ENCODE measurements at regions of chr15 and their contacts with region 1.

Region 1: GRCh38 chr15:41936649-41937567 is 35.4 kb downstream of the EHD4 start:
- DNase-seq: peak; percentile 91
- ATAC-seq: peak; percentile 62
- H3K4me3 Mint-ChIP-seq: peak overlapping the region; percentile 60
- H3K27ac Mint-ChIP-seq: peak overlapping the region; percentile 100
- H3K4me1 Mint-ChIP-seq: peaks cover 74% of the 10 kb centered on the region
- H3K27me3 Mint-ChIP-seq: no peaks in the 10 kb centered on the region

Region 2: DNA sequence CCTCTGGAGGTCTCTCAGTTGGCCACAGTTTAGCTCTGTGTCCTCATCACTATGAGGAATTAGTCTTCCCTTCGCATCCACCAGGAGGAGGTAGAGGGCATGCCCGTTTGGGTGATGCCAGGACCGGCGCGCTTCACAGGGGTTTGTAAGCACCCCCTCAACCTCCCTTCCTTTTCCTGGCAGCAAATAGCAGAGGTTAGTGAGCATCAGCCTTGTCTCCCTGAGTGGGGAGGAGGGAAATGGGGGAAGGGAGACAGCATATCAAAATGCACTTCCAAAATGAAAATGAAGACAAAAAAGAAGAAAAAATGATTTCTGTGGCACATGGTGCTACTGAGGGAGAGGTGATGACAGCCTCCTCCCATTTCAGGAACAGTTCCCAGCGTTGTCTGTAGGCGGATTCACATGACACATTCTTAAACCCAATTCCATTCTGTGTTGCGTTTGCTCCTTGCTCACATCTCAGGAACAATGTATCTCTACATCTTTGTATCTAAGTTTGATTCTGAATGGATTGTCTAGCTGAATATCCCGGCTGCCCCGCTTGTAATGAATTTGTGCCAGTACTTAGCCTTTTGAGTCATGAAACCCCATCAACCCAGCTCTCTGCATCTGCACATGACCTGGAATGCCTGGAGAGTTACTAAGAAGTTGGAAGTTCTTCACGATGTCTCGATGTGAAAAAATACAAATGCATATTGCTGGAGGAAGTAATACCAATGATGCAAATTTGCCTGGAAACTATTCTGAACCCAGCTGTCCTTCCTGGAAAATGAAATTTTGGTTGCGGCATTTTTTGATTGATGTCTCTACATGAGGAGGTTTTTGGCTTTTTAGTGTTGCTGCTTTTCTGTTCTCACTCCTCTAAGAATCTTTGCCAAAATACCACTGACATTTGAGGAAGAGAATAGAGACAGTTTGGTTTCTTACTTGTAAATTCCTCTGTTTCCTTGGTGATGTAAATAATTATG is 332.7 kb before region 1 on chr15:
- CTCF ChIA-PET with region 1: no interaction called
- POLR2A ChIA-PET with region 1: no interaction called
- intact Hi-C with region 1: no loop called
- DNase-seq: peak; percentile 75
- ATAC-seq: peak; percentile 96
- H3K4me3 Mint-ChIP-seq: peak overlapping the region; percentile 58
- H3K27ac Mint-ChIP-seq: peak overlapping the region; percentile 40
- H3K4me1 Mint-ChIP-seq: peaks cover 11% of the 10 kb centered on the region
- H3K27me3 Mint-ChIP-seq: peaks cover 14% of the 10 kb centered on the region

Region 3: DNA sequence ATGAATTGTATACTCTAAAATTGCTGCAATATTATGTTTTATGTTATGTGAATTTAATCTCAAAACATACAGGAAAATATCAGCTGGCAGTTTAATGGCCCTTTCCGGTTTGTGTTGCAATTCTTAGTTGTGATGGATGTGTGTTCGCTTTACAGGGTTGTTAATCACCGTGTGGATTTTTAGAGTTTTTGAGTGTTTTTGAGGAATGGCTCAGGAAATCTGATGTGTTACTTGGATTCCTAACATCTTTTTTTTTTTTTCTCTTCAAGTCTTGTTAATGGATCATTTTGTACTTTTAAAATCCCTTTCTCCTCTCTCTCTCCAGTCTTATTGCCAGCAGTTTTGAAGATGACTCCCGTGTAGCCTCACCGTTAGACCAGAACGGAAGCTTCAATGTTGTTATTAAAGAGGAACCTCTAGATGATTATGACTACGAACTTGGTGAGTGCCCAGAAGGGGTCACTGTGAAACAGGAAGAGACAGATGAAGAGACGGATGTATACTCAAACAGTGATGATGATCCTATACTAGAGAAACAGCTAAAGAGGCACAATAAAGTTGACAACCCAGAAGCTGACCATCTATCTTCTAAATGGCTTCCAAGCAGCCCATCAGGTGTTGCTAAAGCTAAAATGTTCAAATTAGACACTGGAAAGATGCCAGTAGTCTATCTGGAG is 241.0 kb before region 1 on chr15:
- CTCF ChIA-PET with region 1: no interaction called
- POLR2A ChIA-PET with region 1: interaction called, 3 read pairs
- intact Hi-C with region 1: loop called in 1 of 2 experiments (anchors 5 kb)
- DNase-seq: peak; percentile 66
- ATAC-seq: peak; percentile 93
- H3K4me3 Mint-ChIP-seq: peak overlapping the region; percentile 2
- H3K27ac Mint-ChIP-seq: peak overlapping the region; percentile 78
- H3K4me1 Mint-ChIP-seq: peaks cover 43% of the 10 kb centered on the region
- H3K27me3 Mint-ChIP-seq: no peaks in the 10 kb centered on the region

Region 4: DNA sequence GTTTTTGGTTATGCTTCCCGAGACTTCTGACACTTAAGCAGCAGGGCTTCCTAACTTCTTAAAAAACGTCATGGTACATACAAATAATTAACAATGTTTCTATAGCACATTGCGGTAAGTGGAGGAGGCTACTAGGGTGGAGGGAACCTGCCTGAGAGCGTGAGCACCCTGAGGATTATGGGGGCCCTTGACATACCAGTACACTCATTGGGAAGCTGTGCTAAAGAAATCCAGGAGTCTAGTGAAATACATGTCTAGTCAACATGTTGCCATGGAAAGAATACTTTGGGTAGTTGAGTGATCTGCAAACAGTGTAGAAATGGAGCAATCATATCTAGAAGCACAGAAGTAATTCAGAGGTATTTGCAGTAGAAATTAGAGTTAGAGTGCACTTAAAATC is 201.9 kb before region 1 on chr15:
- CTCF ChIA-PET with region 1: no interaction called
- POLR2A ChIA-PET with region 1: no interaction called
- intact Hi-C with region 1: no loop called
- DNase-seq: no peak
- ATAC-seq: no peak
- H3K4me3 Mint-ChIP-seq: no peak overlapping the region
- H3K27ac Mint-ChIP-seq: no peak overlapping the region
- H3K4me1 Mint-ChIP-seq: no peaks in the 10 kb centered on the region
- H3K27me3 Mint-ChIP-seq: no peaks in the 10 kb centered on the region

Region 5: GRCh38 chr15:41894791-41895463 is 42.0 kb before region 1 on chr15:
- CTCF ChIA-PET with region 1: no interaction called
- POLR2A ChIA-PET with region 1: no interaction called
- intact Hi-C with region 1: loop called in 1 of 2 experiments (anchors 2 kb)
- DNase-seq: peak; percentile 85
- ATAC-seq: peak; percentile 96
- H3K4me3 Mint-ChIP-seq: peak overlapping the region; percentile 19
- H3K27ac Mint-ChIP-seq: peak overlapping the region; percentile 74
- H3K4me1 Mint-ChIP-seq: peaks cover 29% of the 10 kb centered on the region
- H3K27me3 Mint-ChIP-seq: no peaks in the 10 kb centered on the region

Region 6: GRCh38 chr15:41917767-41918430 is 19.0 kb before region 1 on chr15:
- CTCF ChIA-PET with region 1: interaction called, 14 read pairs
- POLR2A ChIA-PET with region 1: no interaction called
- intact Hi-C with region 1: no loop called
- DNase-seq: no peak
- ATAC-seq: no peak
- H3K4me3 Mint-ChIP-seq: no peak overlapping the region
- H3K27ac Mint-ChIP-seq: no peak overlapping the region
- H3K4me1 Mint-ChIP-seq: peaks cover 7% of the 10 kb centered on the region
- H3K27me3 Mint-ChIP-seq: no peaks in the 10 kb centered on the region

Region 7: GRCh38 chr15:42035435-42035761 is 98.5 kb after region 1 on chr15:
- CTCF ChIA-PET with region 1: no interaction called
- POLR2A ChIA-PET with region 1: no interaction called
- intact Hi-C with region 1: no loop called
- DNase-seq: peak; percentile 50
- ATAC-seq: peak; percentile 74
- H3K4me3 Mint-ChIP-seq: no peak overlapping the region
- H3K27ac Mint-ChIP-seq: peak overlapping the region; percentile 63
- H3K4me1 Mint-ChIP-seq: peaks cover 11% of the 10 kb centered on the region
- H3K27me3 Mint-ChIP-seq: no peaks in the 10 kb centered on the region

Region 8: GRCh38 chr15:42107473-42107872 is 170.6 kb after region 1 on chr15:
- CTCF ChIA-PET with region 1: no interaction called
- POLR2A ChIA-PET with region 1: no interaction called
- intact Hi-C with region 1: no loop called
- DNase-seq: peak; percentile 81
- ATAC-seq: peak; percentile 95
- H3K4me3 Mint-ChIP-seq: no peak overlapping the region
- H3K27ac Mint-ChIP-seq: peak overlapping the region; percentile 27
- H3K4me1 Mint-ChIP-seq: peaks cover 18% of the 10 kb centered on the region
- H3K27me3 Mint-ChIP-seq: peaks cover 24% of the 10 kb centered on the region

Region 9: GRCh38 chr15:42194502-42194901 is 257.6 kb after region 1 on chr15:
- CTCF ChIA-PET with region 1: interaction called, 4 read pairs
- POLR2A ChIA-PET with region 1: no interaction called
- intact Hi-C with region 1: loop called in 1 of 2 experiments (anchors 2 kb)
- DNase-seq: peak; percentile 37
- ATAC-seq: peak; percentile 24
- H3K4me3 Mint-ChIP-seq: no peak overlapping the region
- H3K27ac Mint-ChIP-seq: peak overlapping the region; percentile 93
- H3K4me1 Mint-ChIP-seq: peaks cover 55% of the 10 kb centered on the region
- H3K27me3 Mint-ChIP-seq: no peaks in the 10 kb centered on the region